Dorsolateral prefrontal cortex (tissue), 120 donors: ENCODE measurements at regions of chr20 and their contacts with region 1.

Region 1: DNA sequence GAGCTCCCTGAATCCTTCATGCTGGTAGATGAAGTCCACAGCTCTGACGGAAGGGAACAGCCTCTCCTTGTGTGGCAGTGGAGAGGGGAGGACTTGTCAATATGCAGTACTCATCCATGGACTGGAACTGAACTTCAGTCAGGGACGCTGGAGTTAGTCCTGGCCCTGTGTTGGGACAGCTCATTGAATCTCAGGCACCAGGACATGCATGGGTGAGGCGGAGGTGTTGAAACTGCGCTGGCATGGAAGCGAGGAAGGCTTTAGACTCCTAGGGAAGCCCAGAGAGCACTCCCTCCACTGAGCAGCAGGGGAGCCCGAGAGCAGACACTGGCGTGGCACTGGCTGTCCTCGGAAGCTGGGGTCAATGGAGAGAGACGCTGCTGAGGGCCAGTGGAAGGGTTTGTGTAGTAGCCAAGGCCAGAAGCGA is 161.3 kb upstream of the GGTLC1 start:
- DNase-seq: no peak
- H3K4me3 ChIP-seq: no peak overlapping the region
- H3K27ac ChIP-seq: no peak overlapping the region
- H3K27me3 ChIP-seq: no peaks in the 10 kb centered on the region
- CTCF ChIP-seq: peak in 16 of 56 donors; percentile 7 to 34 (median 16)

Region 2: GRCh38 chr20:23727016-23727415 is 422.9 kb before region 1 on chr20:
- intact Hi-C with region 1: no loop called
- DNase-seq: no peak
- H3K4me3 ChIP-seq: no peak overlapping the region
- H3K27ac ChIP-seq: no peak overlapping the region
- H3K27me3 ChIP-seq: peaks cover 0 to 4% (median 0%) of the 10 kb centered on the region in 45 donors
- CTCF ChIP-seq: no peak

Region 3: GRCh38 chr20:23988561-23988960 is 161.3 kb before region 1 on chr20 and contains the start of gene GGTLC1:
- intact Hi-C with region 1: no loop called
- DNase-seq: no peak
- H3K4me3 ChIP-seq: no peak within 1 kb of the TSS
- H3K27ac ChIP-seq: no peak within 1 kb of the TSS
- H3K27me3 ChIP-seq: no peaks in the 10 kb centered on the region
- CTCF ChIP-seq: no peak
- total RNA-seq, gene GGTLC1: not detected

Region 4: DNA sequence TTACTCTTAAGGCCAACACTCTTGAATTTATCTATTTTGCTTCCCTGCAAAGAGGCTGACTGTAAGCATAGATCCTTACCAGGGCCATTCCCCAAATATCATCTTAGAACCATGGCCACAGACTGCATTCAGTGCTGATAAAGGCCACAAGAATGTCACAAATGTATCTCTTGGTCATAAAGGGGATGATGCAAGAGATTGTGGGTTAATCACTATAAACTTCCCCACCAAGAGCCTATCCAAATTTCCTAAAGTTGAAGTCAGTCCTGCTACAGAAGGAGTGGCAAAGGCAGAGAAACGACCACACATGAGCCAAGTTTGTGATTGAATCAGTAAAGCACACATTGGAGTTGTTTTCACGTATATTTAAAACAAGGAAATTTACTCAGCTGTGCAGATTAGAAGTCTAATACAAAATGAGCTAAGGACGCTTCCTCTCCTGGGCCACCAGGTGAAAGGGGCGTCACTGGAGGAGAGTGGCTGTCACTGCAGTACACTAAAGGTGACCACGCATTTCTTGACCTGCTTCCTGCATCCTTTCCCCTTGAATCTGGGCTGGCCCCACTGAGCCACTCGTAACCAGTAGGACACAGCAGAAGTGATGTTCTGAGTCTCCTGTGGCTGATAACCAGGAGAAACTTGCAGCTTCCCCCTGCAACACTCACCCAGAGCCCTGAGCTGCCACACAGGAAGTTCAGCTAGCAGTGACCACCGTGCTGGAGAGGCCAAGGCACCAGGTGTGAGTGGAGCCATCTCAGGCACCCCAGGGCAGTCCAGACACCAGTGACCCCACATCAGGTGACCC is 501.5 kb after region 1 on chr20:
- intact Hi-C with region 1: loop called in 1 of 2 experiments (anchors 5 kb)
- DNase-seq: peak in 2 of 10 donors; percentile 27 to 35
- H3K4me3 ChIP-seq: no peak overlapping the region
- H3K27ac ChIP-seq: peak overlapping the region in 16 of 59 donors; percentile 19 to 77 (median 42)
- H3K27me3 ChIP-seq: no peaks in the 10 kb centered on the region
- CTCF ChIP-seq: no peak

Region 5: GRCh38 chr20:24773751-24774201 is 623.9 kb after region 1 on chr20:
- intact Hi-C with region 1: loop called in 1 of 2 experiments (anchors 10 kb)
- DNase-seq: peak in 2 of 10 donors; percentile 8 to 20
- H3K4me3 ChIP-seq: no peak overlapping the region
- H3K27ac ChIP-seq: peak overlapping the region in 8 of 59 donors; percentile 2 to 76 (median 53)
- H3K27me3 ChIP-seq: no peaks in the 10 kb centered on the region
- CTCF ChIP-seq: no peak